ENCODE measurements at regions of chr16 and their contacts with region 1.

Region 1: DNA sequence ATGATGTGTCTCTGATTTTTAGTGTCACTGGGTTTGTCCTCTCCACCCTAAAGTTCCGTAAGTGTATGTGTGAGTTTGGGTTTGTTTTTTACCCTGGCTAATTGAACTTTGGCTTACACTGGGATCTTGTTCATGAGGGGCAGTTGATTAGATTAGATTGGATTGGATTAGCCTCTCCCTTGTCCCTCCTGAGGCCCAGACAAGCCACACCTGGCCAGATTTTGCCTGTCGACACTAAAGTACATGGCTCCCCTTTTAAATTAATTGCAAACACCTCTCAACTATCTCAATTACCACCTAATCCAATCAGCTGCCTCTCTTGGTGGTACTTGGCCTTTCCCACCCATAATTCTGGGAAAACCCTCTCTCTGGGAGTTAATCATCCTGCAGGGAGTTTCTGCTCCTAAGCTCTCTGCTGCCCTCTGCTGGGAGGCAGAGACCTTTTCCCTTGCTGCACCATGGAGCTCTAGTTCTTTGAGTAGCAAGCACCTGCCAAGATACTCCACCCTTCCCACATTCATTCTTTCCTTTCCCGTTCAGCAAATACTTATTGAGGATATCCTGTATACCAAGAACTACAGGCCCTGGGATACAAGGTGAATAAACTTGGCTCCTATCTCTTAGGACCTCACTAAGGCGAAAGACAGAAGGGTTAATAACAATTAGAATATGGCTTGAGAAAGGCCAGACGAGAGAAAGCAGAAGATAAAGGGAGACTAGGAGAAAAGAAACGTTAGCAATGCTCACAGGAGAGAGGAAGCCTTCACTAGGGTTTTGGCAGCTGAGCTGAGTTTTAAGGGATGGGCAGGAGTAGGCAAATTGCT is 60.0 kb upstream of the MPHOSPH6 start:
- DNase-seq: peak; percentile 2
- H3K4me3 ChIP-seq: no peak overlapping the region
- CTCF ChIP-seq: peak; percentile 81

Region 2: DNA sequence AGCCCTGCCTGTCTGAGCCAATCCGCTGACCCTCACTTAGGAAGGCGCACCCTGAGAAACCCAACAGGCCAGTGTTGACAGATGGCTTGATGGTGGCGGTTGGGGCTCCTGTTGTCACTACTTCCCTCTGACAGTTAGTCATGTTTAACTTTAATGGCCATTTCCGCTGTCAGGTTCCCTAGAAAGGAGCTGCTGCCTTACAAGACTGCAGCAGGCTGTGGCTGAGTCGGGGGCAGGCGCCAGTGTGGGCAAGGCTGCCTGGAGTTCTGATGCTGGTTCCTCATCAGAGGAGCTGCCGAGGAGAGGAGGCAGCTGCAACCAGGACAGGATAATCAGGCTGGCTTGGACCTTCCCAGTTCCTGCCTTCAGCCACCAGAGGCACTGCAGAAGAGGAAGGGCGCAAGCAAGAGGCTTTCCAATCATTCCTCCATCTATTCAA is 1912.4 kb before region 1 on chr16:
- CTCF ChIA-PET with region 1: no interaction called
- POLR2A ChIA-PET with region 1: no interaction called
- DNase-seq: no peak
- H3K4me3 ChIP-seq: no peak overlapping the region
- CTCF ChIP-seq: peak; percentile 26

Region 3: GRCh38 chr16:81885976-81886586 is 343.9 kb before region 1 on chr16:
- CTCF ChIA-PET with region 1: interaction called, 19 read pairs
- POLR2A ChIA-PET with region 1: no interaction called
- DNase-seq: no peak
- H3K4me3 ChIP-seq: no peak overlapping the region
- CTCF ChIP-seq: peak; percentile 56

Region 4: GRCh38 chr16:81940781-81941560 is 289.0 kb before region 1 on chr16:
- CTCF ChIA-PET with region 1: interaction called, 96 read pairs
- POLR2A ChIA-PET with region 1: no interaction called
- DNase-seq: peak; percentile 17
- H3K4me3 ChIP-seq: no peak overlapping the region
- CTCF ChIP-seq: peak; percentile 31

Region 5: DNA sequence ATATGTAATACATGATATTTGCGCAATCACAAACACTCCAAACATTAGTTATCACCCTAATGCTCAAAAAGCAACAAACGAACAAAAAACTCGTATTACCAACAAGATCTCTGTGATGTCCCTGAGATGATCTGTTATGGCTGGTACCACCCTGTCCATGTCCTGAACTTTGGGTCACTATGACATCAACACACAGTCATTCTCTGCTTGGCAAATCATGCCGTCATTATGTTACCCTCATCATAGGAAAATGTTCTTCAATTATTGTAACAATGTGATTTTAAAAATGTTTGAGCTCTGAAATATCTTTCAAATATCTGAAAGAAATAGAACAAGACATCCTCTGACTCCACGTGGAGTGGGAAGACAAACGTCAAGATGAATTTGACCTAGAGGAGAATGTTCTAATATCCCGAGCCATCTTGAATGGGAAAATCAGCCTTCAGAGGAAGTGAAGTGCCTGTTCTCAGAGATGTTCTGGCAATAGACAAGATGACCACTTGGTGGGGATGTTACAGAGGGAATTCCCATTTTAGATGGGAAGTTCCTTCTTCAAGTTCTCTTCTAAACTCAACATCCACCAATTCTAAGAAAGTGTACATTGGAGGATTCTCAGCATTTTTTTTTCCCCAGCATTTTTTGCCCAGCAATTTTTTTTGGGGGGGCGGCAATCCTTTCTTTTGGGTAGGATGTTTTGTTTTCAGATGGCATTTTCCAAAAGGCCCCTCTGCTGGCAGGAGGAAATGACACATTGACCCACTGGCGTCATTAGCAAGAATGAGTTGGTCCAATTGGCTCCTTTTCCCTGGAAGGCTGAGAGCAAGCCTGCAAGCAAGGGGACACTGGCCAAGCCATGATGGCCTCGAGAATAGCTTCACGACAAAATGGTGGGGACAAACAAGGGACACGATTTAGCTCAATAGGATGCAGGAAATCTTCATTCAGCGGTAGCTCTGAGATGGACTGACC is 198.6 kb before region 1 on chr16:
- CTCF ChIA-PET with region 1: interaction called, 61 read pairs
- POLR2A ChIA-PET with region 1: no interaction called
- DNase-seq: no peak
- H3K4me3 ChIP-seq: no peak overlapping the region
- CTCF ChIP-seq: peak; percentile 51

Region 6: GRCh38 chr16:82240111-82240510 is 10.1 kb after region 1 on chr16:
- CTCF ChIA-PET with region 1: interaction called, 34 read pairs
- POLR2A ChIA-PET with region 1: no interaction called
- DNase-seq: no peak
- H3K4me3 ChIP-seq: no peak overlapping the region
- CTCF ChIP-seq: no peak

Region 7: GRCh38 chr16:82252582-82252981 is 22.6 kb after region 1 on chr16:
- CTCF ChIA-PET with region 1: no interaction called
- POLR2A ChIA-PET with region 1: no interaction called
- DNase-seq: no peak
- H3K4me3 ChIP-seq: no peak overlapping the region
- CTCF ChIP-seq: no peak

Region 8: GRCh38 chr16:82311528-82311927 is 81.5 kb after region 1 on chr16:
- CTCF ChIA-PET with region 1: no interaction called
- POLR2A ChIA-PET with region 1: no interaction called
- DNase-seq: no peak
- H3K4me3 ChIP-seq: no peak overlapping the region
- CTCF ChIP-seq: no peak